T-cell (primary cell): ENCODE measurements at regions of chrX and their contacts with region 1.

Region 1: GRCh38 chrX:51336584-51336983 is 4.0 kb downstream of the NUDT10 start:
- DNase-seq: peak in 24 of 35 experiments; percentile 1 to 53 (median 10)
- ATAC-seq: peak; percentile 61 to 75 (median 66)
- H3K4me3 ChIP-seq: no peak overlapping the region
- H3K4me3 Mint-ChIP-seq: no peak overlapping the region
- H3K27ac ChIP-seq: no peak overlapping the region
- H3K27ac Mint-ChIP-seq: no peak overlapping the region
- H3K4me1 ChIP-seq: peaks cover 0 to 2% of the 10 kb centered on the region in 2 experiments
- H3K4me1 Mint-ChIP-seq: peaks cover 1 to 9% (median 5%) of the 10 kb centered on the region in 3 donors
- H3K27me3 ChIP-seq: peaks cover 0 to 3% of the 10 kb centered on the region in 2 experiments
- H3K27me3 Mint-ChIP-seq: peaks cover 0 to 6% of the 10 kb centered on the region in 2 donors

Region 2: GRCh38 chrX:51420610-51421009 is 84.0 kb after region 1 on chrX:
- CTCF ChIA-PET with region 1: interaction called, 26 to 38 read pairs
- POLR2A ChIA-PET with region 1: no interaction called
- DNase-seq: peak in 14 of 35 experiments; percentile 2 to 67 (median 19)
- ATAC-seq: peak in 1 of 4 experiments; percentile 40
- H3K4me3 ChIP-seq: no peak overlapping the region
- H3K4me3 Mint-ChIP-seq: no peak overlapping the region
- H3K27ac ChIP-seq: no peak overlapping the region
- H3K27ac Mint-ChIP-seq: no peak overlapping the region
- H3K4me1 ChIP-seq: no peaks in the 10 kb centered on the region
- H3K4me1 Mint-ChIP-seq: peaks cover 0 to 4% (median 0%) of the 10 kb centered on the region in 3 donors
- H3K27me3 ChIP-seq: no peaks in the 10 kb centered on the region
- H3K27me3 Mint-ChIP-seq: peaks cover 0 to 16% of the 10 kb centered on the region in 2 donors

Region 3: GRCh38 chrX:51461053-51462044 is 124.8 kb after region 1 on chrX:
- CTCF ChIA-PET with region 1: interaction called, 20 to 21 read pairs
- POLR2A ChIA-PET with region 1: no interaction called
- DNase-seq: peak in 9 of 35 experiments; percentile 1 to 63 (median 6)
- ATAC-seq: no peak
- H3K4me3 ChIP-seq: no peak overlapping the region
- H3K4me3 Mint-ChIP-seq: no peak overlapping the region
- H3K27ac ChIP-seq: no peak overlapping the region
- H3K27ac Mint-ChIP-seq: no peak overlapping the region
- H3K4me1 ChIP-seq: no peaks in the 10 kb centered on the region
- H3K4me1 Mint-ChIP-seq: no peaks in the 10 kb centered on the region
- H3K27me3 ChIP-seq: no peaks in the 10 kb centered on the region
- H3K27me3 Mint-ChIP-seq: peaks cover 0 to 4% of the 10 kb centered on the region in 2 donors

Region 4: GRCh38 chrX:51641421-51642021 is 304.9 kb after region 1 on chrX:
- CTCF ChIA-PET with region 1: no interaction called
- POLR2A ChIA-PET with region 1: no interaction called
- DNase-seq: peak in 2 of 35 experiments; percentile 2 to 47
- ATAC-seq: no peak
- H3K4me3 ChIP-seq: no peak overlapping the region
- H3K4me3 Mint-ChIP-seq: no peak overlapping the region
- H3K27ac ChIP-seq: no peak overlapping the region
- H3K27ac Mint-ChIP-seq: no peak overlapping the region
- H3K4me1 ChIP-seq: no peaks in the 10 kb centered on the region
- H3K4me1 Mint-ChIP-seq: no peaks in the 10 kb centered on the region
- H3K27me3 ChIP-seq: peaks cover 0 to 5% of the 10 kb centered on the region in 2 experiments
- H3K27me3 Mint-ChIP-seq: peaks cover 24 to 45% of the 10 kb centered on the region in 2 donors